ENCODE measurements at regions of chr10 and their contacts with region 1.

Region 1: DNA sequence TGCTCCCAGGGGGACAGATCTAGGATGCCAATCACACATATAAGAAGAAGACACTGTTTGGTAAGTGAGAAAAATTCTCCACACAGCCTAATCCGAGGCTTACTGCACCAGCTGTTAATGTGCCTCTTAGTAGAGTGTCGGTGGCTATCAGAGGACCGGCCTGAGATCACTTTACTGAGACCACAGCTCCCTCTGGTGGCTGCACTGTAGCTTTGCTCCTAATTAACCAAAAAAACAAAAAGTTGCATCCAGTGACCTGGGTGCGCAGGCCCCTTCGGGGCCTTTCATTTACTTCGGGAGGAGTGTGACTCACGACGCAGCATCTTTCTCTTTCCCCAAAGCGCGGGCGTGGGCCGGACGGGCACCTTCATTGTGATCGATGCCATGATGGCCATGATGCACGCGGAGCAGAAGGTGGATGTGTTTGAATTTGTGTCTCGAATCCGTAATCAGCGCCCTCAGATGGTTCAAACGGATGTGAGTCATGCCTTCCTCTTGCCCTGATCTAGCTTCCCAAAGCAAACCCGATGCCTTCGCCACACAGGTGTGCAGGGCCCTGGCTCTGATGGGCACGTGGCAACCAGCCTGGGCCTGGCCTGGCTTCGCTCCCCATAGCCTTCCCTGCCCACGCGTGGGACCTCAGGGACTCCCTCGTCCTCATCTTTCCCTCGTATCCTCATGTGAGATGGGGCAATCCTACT is 56.7 kb downstream of the MKI67 start:
- DNase-seq: no peak
- ATAC-seq: peak; percentile 58
- H3K4me3 ChIP-seq: no peak overlapping the region
- H3K27ac ChIP-seq: no peak overlapping the region
- H3K4me1 ChIP-seq: peaks cover 11% of the 10 kb centered on the region
- H3K27me3 ChIP-seq: no peaks in the 10 kb centered on the region
- CTCF ChIP-seq: peak; percentile 67 to 91 (median 69)
- EP300 ChIP-seq: no peak
- POLR2A ChIP-seq: no peak; the same call in 1 of the 2 replicates
- RAD21 ChIP-seq: peak; percentile 87

Region 2: DNA sequence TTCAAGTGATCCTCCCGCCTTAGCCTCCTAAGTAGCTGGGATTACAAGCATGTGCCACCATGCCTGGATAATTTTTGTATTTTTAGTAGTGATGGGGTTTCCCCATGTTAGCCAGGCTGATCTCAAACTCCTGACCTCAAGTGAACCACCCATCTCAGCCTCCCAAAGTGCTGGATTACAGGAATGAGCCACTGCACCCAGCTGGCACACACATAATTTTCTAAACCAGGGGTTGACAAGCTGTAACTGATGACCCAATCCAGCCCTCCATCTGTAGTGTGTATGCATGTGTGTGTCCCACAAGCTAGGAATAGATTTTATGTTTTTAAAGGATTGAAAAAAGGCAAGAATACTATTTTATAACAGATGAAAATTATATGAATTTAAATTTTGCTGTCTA is 747.2 kb before region 1 on chr10:
- CTCF ChIA-PET with region 1: no interaction called
- POLR2A ChIA-PET with region 1: no interaction called
- RAD21 ChIA-PET with region 1: no interaction called
- SMC1A ChIA-PET with region 1: no interaction called
- in situ Hi-C with region 1: no loop called
- intact Hi-C with region 1: no loop called
- DNase-seq: no peak
- ATAC-seq: no peak
- H3K4me3 ChIP-seq: no peak overlapping the region
- H3K27ac ChIP-seq: no peak overlapping the region
- H3K4me1 ChIP-seq: no peaks in the 10 kb centered on the region
- H3K27me3 ChIP-seq: no peaks in the 10 kb centered on the region
- CTCF ChIP-seq: no peak
- EP300 ChIP-seq: no peak
- POLR2A ChIP-seq: no peak
- RAD21 ChIP-seq: no peak

Region 3: DNA sequence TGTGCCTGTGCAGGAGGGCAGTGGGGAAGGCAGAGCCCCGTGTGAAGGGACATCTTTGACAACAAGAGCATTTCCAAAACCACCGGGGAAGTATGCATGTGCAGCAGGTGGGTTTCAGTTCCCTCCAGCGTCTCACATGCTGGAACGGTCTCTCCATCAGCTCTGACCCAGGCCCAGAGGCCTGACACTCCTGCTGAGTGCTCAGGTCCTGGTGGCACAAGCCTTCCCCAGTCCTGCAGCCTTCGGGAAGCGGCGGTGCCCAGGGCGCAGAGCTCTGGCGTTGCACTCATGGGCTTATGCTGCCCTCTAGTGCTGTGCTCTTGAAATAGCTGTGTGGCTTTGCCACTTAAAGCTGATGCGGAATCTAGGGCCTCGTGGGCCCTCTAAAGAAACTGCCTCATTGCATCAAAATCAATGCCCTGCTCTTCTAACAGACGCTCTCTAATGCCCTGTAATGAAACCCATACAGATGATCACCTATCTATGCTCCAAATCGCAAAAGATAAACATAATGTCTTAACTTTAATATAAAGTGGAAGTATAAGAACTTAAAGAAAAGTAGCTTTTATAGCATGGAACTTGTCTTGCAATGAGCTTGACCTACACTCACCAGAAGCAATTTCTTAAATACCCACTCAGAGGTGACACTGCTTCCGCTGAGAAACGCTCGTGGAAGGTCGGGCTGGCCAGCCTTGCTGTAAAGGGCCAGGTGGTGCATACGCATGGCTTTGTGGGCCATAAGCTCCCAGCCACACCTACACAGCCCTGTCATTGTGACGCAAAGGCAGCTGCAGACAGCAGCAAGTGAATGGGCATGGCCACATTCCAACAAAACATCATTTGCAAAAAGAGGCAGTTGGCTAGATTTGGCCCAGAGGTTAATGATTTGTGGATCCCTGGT is 215.4 kb before region 1 on chr10:
- CTCF ChIA-PET with region 1: interaction called, 7 read pairs
- POLR2A ChIA-PET with region 1: no interaction called
- RAD21 ChIA-PET with region 1: interaction called, 8 read pairs
- SMC1A ChIA-PET with region 1: no interaction called
- in situ Hi-C with region 1: no loop called
- intact Hi-C with region 1: loop called (anchors 2 kb)
- DNase-seq: no peak
- ATAC-seq: peak; percentile 95
- H3K4me3 ChIP-seq: no peak overlapping the region
- H3K27ac ChIP-seq: no peak overlapping the region
- H3K4me1 ChIP-seq: peaks cover 14% of the 10 kb centered on the region
- H3K27me3 ChIP-seq: no peaks in the 10 kb centered on the region
- CTCF ChIP-seq: peak; percentile 78 to 83 (median 80)
- EP300 ChIP-seq: no peak
- POLR2A ChIP-seq: no peak
- RAD21 ChIP-seq: peak; percentile 82

Region 4: GRCh38 chr10:128011175-128011979 is 58.1 kb before region 1 on chr10:
- CTCF ChIA-PET with region 1: interaction called, 16 read pairs
- POLR2A ChIA-PET with region 1: no interaction called
- RAD21 ChIA-PET with region 1: interaction called, 13 read pairs
- SMC1A ChIA-PET with region 1: interaction called, 7 read pairs
- in situ Hi-C with region 1: no loop called
- intact Hi-C with region 1: loop called (anchors 1 kb)
- DNase-seq: peak; percentile 19
- ATAC-seq: peak; percentile 93
- H3K4me3 ChIP-seq: no peak overlapping the region
- H3K27ac ChIP-seq: no peak overlapping the region
- H3K4me1 ChIP-seq: no peaks in the 10 kb centered on the region
- H3K27me3 ChIP-seq: 0 out of 4 replicates have a peak, but pooled peaks cover 0 to 2% of the 10 kb centered on the region in 2 experiments
- CTCF ChIP-seq: peak; percentile 97 to 99 (median 98); a peak in 5 of 6 replicates
- EP300 ChIP-seq: no peak
- POLR2A ChIP-seq: no peak
- RAD21 ChIP-seq: peak; percentile 73

Region 5: DNA sequence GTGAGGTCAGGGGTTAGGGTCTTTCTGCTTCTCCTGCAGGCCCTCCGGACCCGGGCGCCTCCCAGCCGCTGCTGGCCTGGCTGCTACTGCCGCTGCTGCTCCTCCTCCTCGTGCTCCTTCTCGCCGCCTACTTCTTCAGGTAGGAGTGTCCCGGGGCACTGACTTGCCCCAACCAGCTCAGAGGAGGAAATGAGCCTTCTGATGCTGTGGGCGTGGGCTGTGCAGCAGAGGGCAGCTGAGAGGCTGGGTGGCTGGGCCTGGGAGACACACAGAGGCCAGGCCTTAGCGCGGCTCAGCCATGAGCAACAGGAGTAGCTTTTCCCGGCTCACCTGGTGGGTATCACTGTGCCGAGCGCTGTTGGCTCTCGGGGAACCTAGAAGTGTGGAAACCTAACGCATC is 22.1 kb before region 1 on chr10:
- CTCF ChIA-PET with region 1: interaction called, 42 read pairs
- POLR2A ChIA-PET with region 1: interaction called, 117 read pairs
- RAD21 ChIA-PET with region 1: interaction called, 82 read pairs
- SMC1A ChIA-PET with region 1: interaction called, 116 read pairs
- in situ Hi-C with region 1: no loop called
- intact Hi-C with region 1: loop called (anchors 1 kb)
- DNase-seq: peak; percentile 63
- ATAC-seq: peak; percentile 99
- H3K4me3 ChIP-seq: peak overlapping the region; percentile 70
- H3K27ac ChIP-seq: peak overlapping the region; percentile 54
- H3K4me1 ChIP-seq: peaks cover 30% of the 10 kb centered on the region
- H3K27me3 ChIP-seq: no peaks in the 10 kb centered on the region
- CTCF ChIP-seq: no peak
- EP300 ChIP-seq: no peak
- POLR2A ChIP-seq: peak; percentile 89
- RAD21 ChIP-seq: no peak

Measured in GM12878 (cell line).